ENCODE measurements at regions of chr1 and their contacts with region 1.

Region 1: GRCh38 chr1:67535474-67535873 is 105.3 kb upstream of the SERBP1 start:
- DNase-seq: peak; percentile 70
- ATAC-seq: peak; percentile 87
- H3K4me3 ChIP-seq: no peak overlapping the region
- H3K27ac ChIP-seq: peak overlapping the region; percentile 79
- H3K4me1 ChIP-seq: peaks cover 18% of the 10 kb centered on the region
- H3K27me3 ChIP-seq: no peaks in the 10 kb centered on the region
- CTCF ChIP-seq: peak; percentile 98

Region 2: GRCh38 chr1:67748630-67749029 is 213.2 kb after region 1 on chr1:
- CTCF ChIA-PET with region 1: interaction called, 4 read pairs
- POLR2A ChIA-PET with region 1: no interaction called
- in situ Hi-C with region 1: no loop called
- intact Hi-C with region 1: loop called (anchors 5 kb)
- DNase-seq: no peak
- ATAC-seq: peak; percentile 43; the same call in 1 of the 2 replicates
- H3K4me3 ChIP-seq: no peak overlapping the region
- H3K27ac ChIP-seq: peak overlapping the region; percentile 88
- H3K4me1 ChIP-seq: peaks cover 52% of the 10 kb centered on the region
- H3K27me3 ChIP-seq: no peaks in the 10 kb centered on the region
- CTCF ChIP-seq: no peak